H1 (cell line): ENCODE measurements at regions of chr19 and their contacts with region 1.

Region 1: DNA sequence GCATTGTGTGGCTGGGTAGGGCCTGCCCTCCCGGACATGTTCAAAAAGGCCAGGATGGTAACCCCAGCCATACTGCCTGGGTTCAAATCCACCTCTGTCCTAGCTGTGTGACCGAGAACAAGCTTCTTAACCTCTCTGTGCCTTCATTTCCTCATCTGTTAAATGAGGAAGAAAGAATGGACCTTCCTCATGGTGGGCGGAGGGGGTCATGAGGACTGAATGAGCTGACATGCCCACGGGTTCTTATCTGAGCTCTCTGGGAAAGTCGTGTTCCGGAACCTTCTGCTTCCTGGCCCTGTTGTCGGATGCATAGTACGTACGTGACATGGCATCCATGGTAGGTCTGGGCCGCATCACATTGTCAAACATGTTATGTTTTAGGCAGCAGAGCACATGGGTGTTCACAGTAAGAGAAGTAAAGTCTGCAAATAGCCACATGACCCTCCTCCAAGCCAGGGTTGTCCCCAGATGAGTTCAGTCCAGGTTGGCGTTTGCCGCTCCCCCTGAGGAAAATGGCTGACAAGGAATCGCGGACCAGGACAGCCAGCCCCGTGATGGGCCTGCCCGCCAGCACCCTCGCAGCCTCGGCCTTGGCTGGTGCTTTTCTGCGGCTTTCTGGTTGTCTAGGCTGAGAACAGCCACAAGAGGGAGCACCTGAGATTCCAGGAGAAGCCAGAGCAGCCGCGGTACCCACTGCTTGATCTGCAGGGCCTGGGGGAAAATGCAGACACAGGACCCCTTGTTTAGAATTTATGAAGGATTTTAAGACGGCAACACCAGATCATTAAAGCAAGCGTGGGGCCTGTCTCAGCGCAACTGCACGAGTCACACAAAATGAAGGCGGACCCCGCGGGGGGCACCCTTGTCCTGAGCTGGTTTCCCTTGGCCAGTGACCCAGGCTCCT is 2.4 kb upstream of the NTN5 start:
- DNase-seq: peak in 1 of 2 experiments; percentile 90
- H3K4me3 ChIP-seq: peak overlapping the region in 1 of 4 experiments; percentile 15; a peak in 1 of 8 replicates
- H3K27ac ChIP-seq: no peak overlapping the region
- H3K4me1 ChIP-seq: peaks cover 2 to 23% (median 19%) of the 10 kb centered on the region in 4 experiments
- H3K27me3 ChIP-seq: peaks cover 0 to 5% (median 3%) of the 10 kb centered on the region in 4 experiments; a peak in 2 of 7 replicates
- CTCF ChIP-seq: peak; percentile 68 to 95 (median 84)
- EP300 ChIP-seq: no peak
- POLR2A ChIP-seq: no peak
- RAD21 ChIP-seq: peak; percentile 75 to 84

Region 2: DNA sequence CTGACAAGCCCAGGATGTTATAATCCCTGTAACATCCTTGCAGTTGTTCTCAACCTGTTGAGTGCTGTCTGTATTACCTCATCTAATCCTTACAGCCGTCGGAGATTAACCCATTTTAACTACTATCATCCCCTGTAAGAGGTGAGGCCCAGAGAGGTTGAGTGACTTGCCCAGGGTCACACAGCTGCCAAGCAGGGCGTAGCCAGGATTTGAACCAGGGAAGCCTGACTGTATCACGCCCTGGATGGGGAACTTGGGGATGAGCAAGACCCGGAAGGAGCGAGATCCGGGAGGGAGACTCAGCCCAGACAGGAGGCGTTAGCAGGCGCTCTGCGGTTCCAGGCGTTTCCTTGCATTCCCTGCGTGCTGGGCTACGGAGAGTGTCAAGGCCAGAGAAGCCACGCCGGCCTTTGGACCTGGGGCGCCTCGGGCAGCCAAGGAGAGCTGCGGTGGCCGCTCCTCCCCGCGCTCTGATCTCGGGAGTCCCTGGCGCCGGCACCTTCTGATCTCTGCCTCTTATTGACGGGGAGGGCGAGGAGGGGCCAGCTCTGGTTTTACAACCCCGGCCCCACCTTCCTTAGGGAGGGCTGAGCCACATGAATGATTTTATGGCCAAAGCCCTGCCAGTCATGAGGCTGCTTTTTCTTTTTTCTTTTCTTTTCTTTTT is 117.0 kb before region 1 on chr19:
- CTCF ChIA-PET with region 1: no interaction called
- POLR2A ChIA-PET with region 1: no interaction called
- DNase-seq: no peak
- H3K4me3 ChIP-seq: no peak overlapping the region
- H3K27ac ChIP-seq: no peak overlapping the region
- H3K4me1 ChIP-seq: peaks cover 0 to 15% (median 10%) of the 10 kb centered on the region in 4 experiments; a peak in 6 of 7 replicates
- H3K27me3 ChIP-seq: no peaks in the 10 kb centered on the region
- CTCF ChIP-seq: no peak
- EP300 ChIP-seq: no peak
- POLR2A ChIP-seq: no peak
- RAD21 ChIP-seq: no peak

Region 3: GRCh38 chr19:48646001-48646721 is 29.0 kb before region 1 on chr19 and contains the start of gene CA11:
- CTCF ChIA-PET with region 1: interaction called, 26 read pairs
- POLR2A ChIA-PET with region 1: interaction called, 5 read pairs
- DNase-seq: peak; percentile 89 to 95
- H3K4me3 ChIP-seq: peak within 1 kb of the TSS; percentile 68 to 84 (median 82)
- H3K27ac ChIP-seq: peak within 1 kb of the TSS; percentile 78
- H3K4me1 ChIP-seq: peaks cover 0 to 7% (median 1%) of the 10 kb centered on the region in 4 experiments; a peak in 4 of 7 replicates
- H3K27me3 ChIP-seq: no peaks in the 10 kb centered on the region
- CTCF ChIP-seq: peak; percentile 81 to 96 (median 88)
- EP300 ChIP-seq: peak in 1 of 2 experiments; percentile 52; a peak in 1 of 3 replicates
- POLR2A ChIP-seq: 0 out of 3 replicates have a peak, but pooled peaks of 1 of the 2 experiments have one; percentile 22
- RAD21 ChIP-seq: peak; percentile 91 to 96
- total RNA-seq, gene CA11: 51.7 and 53.0 TPM in 2 replicates

Region 4: GRCh38 chr19:48698046-48698445 is 22.9 kb after region 1 on chr19:
- CTCF ChIA-PET with region 1: interaction called, 59 read pairs
- POLR2A ChIA-PET with region 1: interaction called, 18 read pairs
- DNase-seq: no peak
- H3K4me3 ChIP-seq: no peak overlapping the region
- H3K27ac ChIP-seq: no peak overlapping the region
- H3K4me1 ChIP-seq: peaks cover 0 to 5% (median 1%) of the 10 kb centered on the region in 4 experiments; a peak in 4 of 7 replicates
- H3K27me3 ChIP-seq: no peaks in the 10 kb centered on the region
- CTCF ChIP-seq: no peak
- EP300 ChIP-seq: no peak
- POLR2A ChIP-seq: no peak
- RAD21 ChIP-seq: no peak

Region 5: GRCh38 chr19:48713864-48714758 is 38.9 kb after region 1 on chr19:
- CTCF ChIA-PET with region 1: interaction called, 53 read pairs
- POLR2A ChIA-PET with region 1: interaction called, 12 read pairs
- DNase-seq: peak; percentile 98 to 99
- H3K4me3 ChIP-seq: peak overlapping the region; percentile 76 to 86 (median 82)
- H3K27ac ChIP-seq: peak overlapping the region; percentile 70; the same call in 1 of the 2 replicates
- H3K4me1 ChIP-seq: peaks cover 0 to 27% (median 7%) of the 10 kb centered on the region in 4 experiments; a peak in 6 of 7 replicates
- H3K27me3 ChIP-seq: no peaks in the 10 kb centered on the region
- CTCF ChIP-seq: no peak
- EP300 ChIP-seq: no peak
- POLR2A ChIP-seq: no peak
- RAD21 ChIP-seq: no peak

Region 6: DNA sequence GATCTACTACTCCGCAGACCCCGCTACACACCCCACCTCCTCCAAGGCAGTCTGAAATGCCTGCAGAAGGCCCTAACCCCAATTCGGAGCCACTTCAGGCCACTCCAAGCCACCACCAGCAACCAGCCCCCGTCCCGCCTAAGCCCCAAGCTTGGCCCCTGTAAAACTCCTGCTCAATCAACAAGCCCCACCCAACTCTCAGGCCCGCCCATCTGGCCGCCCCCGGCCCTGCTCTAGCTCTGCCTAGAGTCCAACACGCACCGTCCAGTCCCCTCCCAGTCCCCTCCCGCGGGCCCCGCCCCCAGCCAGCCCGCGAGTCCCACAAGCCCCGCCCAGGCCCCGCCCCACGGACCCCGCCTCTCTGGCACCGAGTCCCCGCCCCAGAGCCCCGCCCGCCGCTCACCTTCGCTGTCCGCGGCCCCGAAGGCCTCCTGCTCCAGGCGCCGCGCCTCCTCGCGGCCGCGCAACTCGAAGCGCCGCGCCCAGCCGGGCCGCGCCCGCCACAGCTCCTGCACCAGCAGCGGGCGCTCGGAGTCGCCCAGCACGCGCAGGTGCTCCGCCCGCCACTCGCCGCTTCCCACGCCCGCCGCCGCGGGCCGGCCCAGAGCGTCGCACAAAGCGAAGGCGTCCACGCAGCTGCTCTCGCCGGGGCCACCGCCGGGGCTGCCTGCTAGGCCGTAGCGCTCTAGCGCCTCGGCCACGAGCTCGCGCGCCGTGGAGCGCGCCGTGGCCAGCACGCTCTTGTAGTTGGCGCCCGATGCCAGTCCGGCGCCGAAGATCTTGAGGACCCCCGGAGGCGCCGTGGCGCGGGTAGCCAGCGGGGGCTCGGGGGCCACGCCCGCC is 63.6 kb after region 1 on chr19:
- CTCF ChIA-PET with region 1: interaction called, 23 read pairs
- POLR2A ChIA-PET with region 1: interaction called, 4 read pairs
- DNase-seq: peak; percentile 89 to 99
- H3K4me3 ChIP-seq: peak overlapping the region; percentile 38 to 75 (median 52)
- H3K27ac ChIP-seq: no peak overlapping the region
- H3K4me1 ChIP-seq: peaks cover 5 to 26% (median 22%) of the 10 kb centered on the region in 4 experiments
- H3K27me3 ChIP-seq: peaks cover 3 to 19% (median 12%) of the 10 kb centered on the region in 4 experiments; a peak in 6 of 7 replicates
- CTCF ChIP-seq: peak; percentile 48 to 86 (median 56)
- EP300 ChIP-seq: no peak
- POLR2A ChIP-seq: no peak
- RAD21 ChIP-seq: peak; percentile 27 to 65